Left colon (tissue), 2 donors: ENCODE measurements at regions of chr17 and their contacts with region 1.

Region 1: DNA sequence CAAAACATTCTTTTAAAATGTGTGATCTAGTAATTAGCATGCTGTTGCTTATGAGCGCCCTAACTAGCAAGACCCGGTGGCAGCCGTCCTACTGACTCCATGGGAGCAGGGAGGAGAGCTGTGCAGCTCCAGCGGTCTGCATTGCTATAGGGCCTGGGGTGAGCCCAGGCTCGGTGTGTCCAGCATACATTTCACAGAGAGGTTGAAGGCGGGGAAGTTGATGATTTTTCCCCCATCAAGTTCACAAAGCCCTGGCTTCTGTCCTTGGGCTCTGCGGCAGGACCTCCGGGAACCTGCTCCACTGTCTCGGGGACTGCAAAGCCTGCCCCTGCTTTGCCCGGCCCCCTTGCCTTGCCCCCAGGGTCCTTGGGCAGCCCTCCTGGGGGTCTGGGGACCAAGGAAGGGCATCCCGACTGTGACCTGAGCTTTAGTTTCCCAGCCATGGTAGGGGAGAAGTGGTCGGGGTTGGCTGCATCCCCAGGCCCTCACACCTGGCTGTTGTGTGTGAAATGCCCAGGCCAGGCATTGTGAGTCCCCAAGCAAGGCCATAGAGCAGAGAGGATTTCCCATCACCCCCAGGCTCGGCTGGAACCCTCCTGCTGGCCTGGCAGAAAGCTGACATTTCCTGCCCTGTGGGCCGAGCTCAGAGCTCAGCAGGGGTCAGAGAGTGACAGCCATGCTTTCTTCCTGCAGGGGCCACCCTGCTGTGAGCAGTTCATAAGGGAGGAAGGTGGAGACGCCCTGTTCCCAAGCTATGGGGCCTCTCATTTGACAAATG is 24.8 kb downstream of the KCNJ12 start:
- DNase-seq: no peak
- ATAC-seq: no peak

Region 2: GRCh38 chr17:21296091-21297025 is 104.6 kb before region 1 on chr17:
- intact Hi-C with region 1: no loop called
- DNase-seq: no peak
- ATAC-seq: no peak

Region 3: GRCh38 chr17:21689604-21690003 is 288.6 kb after region 1 on chr17:
- intact Hi-C with region 1: loop called in 1 of 2 experiments (anchors 5 kb)
- DNase-seq: peak in 1 of 2 donors; percentile 50
- ATAC-seq: no peak